ENCODE measurements at regions of chr5 and their contacts with region 1.

Region 1: DNA sequence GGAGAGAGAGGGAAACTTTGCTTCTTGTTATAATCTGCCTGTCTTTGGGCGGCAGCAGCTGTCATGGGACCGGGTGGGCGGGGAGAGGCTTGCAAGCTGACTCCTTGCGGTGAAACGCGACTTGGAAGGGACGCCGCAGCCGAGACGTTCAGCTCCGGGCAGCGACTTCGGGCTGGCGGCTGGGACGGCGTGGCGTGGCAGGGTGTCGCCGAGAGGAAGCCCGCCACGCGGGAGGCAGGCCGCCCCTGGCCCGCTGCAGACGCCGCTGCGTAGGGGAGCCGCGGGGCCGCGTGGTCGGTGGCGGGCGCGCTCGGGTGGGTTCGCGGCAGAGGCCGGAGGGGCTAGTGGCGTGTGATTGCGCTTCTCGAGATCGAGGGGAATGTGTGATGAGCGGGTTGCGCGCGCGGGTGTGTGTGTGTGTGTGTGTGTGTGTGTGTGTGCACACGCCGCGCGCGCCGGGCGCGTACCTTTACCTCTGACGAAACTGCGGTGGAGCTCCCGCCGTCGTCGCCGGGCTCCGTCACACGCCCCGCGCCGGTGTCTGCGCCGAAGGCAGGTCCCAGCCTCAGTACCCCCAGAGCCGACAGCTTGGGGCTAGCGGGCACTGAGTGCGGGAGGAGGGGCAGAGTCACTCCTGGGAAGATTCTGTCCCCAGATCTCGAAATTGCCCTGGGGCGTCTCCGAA is 1.7 kb downstream of the PPARGC1B start:
- DNase-seq: peak; percentile 93
- ATAC-seq: peak; percentile 57
- H3K4me3 ChIP-seq: peak overlapping the region; percentile 82
- H3K27ac ChIP-seq: 0 out of 2 replicates have a peak overlapping the region, but pooled peaks have one; percentile 11
- H3K4me1 ChIP-seq: peaks cover 22% of the 10 kb centered on the region
- H3K27me3 ChIP-seq: no peaks in the 10 kb centered on the region
- CTCF ChIP-seq: no peak

Region 2: DNA sequence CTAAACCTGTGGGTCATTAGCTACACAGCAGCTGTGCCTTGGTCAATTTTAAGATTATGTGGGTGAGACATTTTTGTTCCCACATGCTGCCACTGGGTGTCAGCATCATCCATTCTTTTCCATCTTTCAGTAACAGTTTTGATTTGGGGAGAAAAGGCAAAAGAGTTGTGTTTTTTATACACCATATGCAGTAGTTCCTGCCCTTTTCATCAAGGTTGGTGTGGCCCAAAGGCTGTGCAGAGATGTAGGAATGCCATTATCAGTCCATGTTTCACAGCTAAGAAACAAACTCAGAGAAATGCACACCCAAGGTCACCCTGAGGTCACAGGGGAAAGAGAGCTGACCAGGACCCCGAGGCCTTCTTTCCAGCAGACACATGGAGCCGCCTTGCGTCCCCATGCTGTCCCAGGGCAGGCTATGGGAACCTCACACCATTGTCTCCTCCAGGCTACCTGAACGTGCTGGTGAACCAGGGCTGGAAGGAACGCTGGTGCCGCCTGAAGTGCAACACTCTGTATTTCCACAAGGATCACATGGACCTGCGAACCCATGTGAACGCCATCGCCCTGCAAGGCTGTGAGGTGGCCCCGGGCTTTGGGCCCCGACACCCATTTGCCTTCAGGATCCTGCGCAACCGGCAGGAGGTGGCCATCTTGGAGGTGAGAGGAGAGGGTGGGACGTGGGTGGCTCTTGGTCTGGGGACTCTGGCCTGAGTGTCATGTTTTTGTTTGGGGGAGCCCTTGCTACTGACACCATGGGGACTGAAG is 414.3 kb before region 1 on chr5:
- CTCF ChIA-PET with region 1: no interaction called
- POLR2A ChIA-PET with region 1: interaction called, 27 read pairs
- intact Hi-C with region 1: no loop called
- DNase-seq: peak; percentile 86
- ATAC-seq: peak; percentile 72
- H3K4me3 ChIP-seq: no peak overlapping the region
- H3K27ac ChIP-seq: no peak overlapping the region
- H3K4me1 ChIP-seq: peaks cover 10% of the 10 kb centered on the region
- H3K27me3 ChIP-seq: no peaks in the 10 kb centered on the region
- CTCF ChIP-seq: peak; percentile 98

Region 3: DNA sequence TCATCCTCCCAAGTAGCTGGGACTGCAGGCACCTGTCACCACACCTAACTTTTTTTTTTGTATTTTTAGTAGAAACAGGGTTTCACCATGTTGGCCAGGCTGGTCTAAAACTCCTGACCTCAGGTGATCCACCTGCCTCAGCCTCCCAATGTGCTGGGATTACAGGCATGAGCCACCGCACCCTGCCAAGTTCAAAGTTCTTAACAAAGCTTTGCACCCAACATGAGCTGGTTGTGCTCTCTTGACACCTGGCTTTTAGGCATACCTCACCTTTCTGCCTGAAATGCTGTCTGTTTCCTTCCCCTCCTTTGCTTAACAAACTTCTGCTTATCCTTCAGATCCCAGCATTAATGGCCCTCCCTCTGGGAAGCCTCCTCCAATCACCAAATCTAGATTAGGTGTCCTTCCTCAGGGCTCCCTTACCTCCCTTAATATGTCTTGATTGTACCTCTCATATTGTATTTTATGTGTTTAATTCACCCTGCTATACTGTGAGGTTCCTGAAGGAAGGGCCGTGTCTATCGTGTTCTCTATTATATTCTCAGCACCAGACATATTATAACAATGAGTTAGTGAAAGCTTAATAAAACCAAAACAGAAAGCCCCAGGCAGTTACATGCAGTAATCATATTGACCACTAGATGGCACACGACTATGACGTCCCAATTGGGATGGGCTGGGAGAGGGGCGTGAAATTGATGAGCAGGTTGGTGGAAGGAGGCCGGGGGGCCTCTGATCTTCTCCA is 64.5 kb before region 1 on chr5:
- CTCF ChIA-PET with region 1: interaction called, 17 read pairs
- POLR2A ChIA-PET with region 1: no interaction called
- intact Hi-C with region 1: loop called (anchors 2 kb)
- DNase-seq: peak; percentile 79
- ATAC-seq: peak; percentile 47
- H3K4me3 ChIP-seq: no peak overlapping the region
- H3K27ac ChIP-seq: no peak overlapping the region
- H3K4me1 ChIP-seq: no peaks in the 10 kb centered on the region
- H3K27me3 ChIP-seq: no peaks in the 10 kb centered on the region
- CTCF ChIP-seq: peak; percentile 99

Region 4: DNA sequence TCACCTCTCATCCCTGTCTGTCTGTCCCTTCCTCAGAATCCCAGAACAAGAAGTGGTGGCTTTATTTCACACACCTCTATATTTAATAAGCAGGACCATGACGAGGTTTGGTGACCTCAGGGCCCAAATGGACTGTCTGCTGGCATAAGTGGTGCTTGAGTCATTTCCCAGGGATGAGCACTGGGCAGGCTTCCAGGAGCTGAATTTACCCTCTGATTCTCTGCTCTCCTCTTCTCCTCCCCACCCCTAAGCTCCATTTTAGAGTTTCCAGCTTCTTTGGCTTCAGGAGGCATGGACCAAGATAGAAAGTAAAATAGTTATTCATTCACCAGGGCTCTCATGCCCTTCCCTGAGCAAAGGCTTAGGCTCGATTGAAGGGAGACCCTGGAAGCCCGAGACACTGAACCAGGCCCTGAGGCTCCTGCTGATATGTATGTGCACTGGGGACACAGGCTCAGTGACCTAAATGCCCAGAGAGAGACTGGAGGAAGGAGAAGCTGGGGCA is 67.4 kb after region 1 on chr5:
- CTCF ChIA-PET with region 1: no interaction called
- POLR2A ChIA-PET with region 1: no interaction called
- intact Hi-C with region 1: loop called (anchors 5 kb)
- DNase-seq: peak; percentile 94
- ATAC-seq: peak; percentile 87
- H3K4me3 ChIP-seq: no peak overlapping the region
- H3K27ac ChIP-seq: peak overlapping the region; percentile 35
- H3K4me1 ChIP-seq: peaks cover 15% of the 10 kb centered on the region
- H3K27me3 ChIP-seq: no peaks in the 10 kb centered on the region
- CTCF ChIP-seq: no peak

Region 5: GRCh38 chr5:149852641-149853330 is 121.0 kb after region 1 on chr5:
- CTCF ChIA-PET with region 1: no interaction called
- POLR2A ChIA-PET with region 1: interaction called, 12 read pairs
- intact Hi-C with region 1: no loop called
- DNase-seq: peak; percentile 87
- ATAC-seq: peak; percentile 93
- H3K4me3 ChIP-seq: no peak overlapping the region
- H3K27ac ChIP-seq: no peak overlapping the region
- H3K4me1 ChIP-seq: peaks cover 7% of the 10 kb centered on the region; the same call in 1 of the 2 replicates
- H3K27me3 ChIP-seq: no peaks in the 10 kb centered on the region
- CTCF ChIP-seq: peak; percentile 99

Measured in PC-3 (cell line).